Ascending aorta (tissue), 2 donors: ENCODE measurements at regions of chr20 and their contacts with region 1.

Region 1: DNA sequence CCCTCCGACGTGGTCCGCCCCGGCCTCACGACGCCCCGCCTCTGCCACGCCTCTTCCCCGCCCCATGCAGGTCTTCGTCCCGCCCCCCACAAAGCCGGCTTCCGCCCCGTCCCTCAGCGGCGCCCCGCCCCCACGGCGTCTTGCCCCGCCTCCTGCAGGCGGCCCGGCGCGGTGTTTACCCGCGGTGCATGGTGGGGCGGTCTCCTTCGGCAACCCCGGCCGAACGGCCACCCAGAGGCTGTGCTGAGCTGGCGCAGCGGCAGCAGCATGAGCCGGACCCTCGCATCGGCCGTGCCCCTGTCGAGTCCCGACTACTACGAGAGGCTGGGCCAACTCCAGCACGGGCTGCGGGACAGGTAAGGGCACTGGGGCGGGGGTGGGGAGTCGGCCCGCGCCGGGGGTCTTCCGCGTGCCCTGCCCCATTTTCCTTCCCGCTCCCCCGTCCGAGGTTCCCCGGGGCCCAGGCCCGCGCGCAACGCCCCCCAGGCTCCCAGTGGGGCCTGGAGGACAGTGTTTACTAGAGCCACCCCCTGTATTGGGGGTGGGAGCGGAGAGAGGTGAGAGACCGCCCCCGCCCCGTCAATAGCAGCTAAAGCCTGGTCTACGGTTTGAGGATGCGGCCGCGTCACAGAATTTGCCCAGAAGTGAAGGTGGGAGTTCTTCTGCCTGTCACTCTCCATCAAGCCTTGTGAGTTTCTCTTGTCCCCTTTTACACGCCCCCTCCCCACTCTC is at the start of gene KIZ:
- DNase-seq: peak; percentile 81 to 97
- H3K4me3 ChIP-seq: peak within 1 kb of the TSS; percentile 74 to 96
- H3K27ac ChIP-seq: peak within 1 kb of the TSS; percentile 72 to 83
- H3K4me1 ChIP-seq: peaks cover 2 to 4% of the 10 kb centered on the region in 2 donors
- H3K27me3 ChIP-seq: no peaks in the 10 kb centered on the region
- CTCF ChIP-seq: peak; percentile 39 to 67 (median 41)
- total RNA-seq, gene KIZ: 7.8 TPM

Region 2: DNA sequence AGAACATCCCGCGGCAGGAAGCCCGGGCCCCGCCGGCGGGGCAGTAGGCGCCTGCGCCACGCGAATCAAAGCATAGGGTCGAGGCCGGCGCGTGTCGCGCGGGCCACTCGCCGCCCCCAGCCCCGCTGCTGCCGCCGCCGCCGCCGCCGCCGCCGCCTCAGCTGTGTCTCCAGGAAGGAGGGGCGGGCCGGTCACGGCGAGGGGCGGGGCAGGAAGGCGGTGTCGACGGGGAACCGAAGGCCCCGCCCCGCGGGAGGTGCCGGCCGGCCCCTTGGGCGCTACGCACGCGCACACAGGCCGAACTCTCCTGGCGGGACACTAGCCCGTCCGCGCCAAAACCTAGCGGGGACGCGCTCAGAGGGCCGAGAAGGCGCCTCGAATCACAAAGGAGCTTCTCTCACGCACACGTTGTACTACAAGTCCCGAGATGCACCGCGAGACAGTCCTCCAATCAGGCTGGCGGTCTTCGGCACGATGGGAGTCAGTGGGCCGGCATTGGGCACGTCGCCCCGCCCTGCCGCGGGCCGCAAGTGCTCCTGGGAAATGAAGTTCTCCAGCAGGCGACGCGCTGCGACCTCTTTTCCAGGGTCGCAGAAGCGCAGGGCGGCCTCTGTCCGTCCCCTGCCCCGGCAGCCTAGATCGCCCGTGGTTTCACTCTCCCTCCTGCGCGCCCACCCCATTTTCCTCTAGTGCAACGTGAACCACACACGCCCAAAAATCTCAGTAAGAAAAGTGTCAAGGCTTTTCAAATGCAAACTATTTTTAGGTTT is 413.4 kb before region 1 on chr20 and contains the start of gene RALGAPA2:
- intact Hi-C with region 1: loop called (anchors 5 kb)
- DNase-seq: peak; percentile 92 to 99
- H3K4me3 ChIP-seq: peak within 1 kb of the TSS; percentile 93 to 96
- H3K27ac ChIP-seq: peak within 1 kb of the TSS; percentile 90 to 92
- H3K4me1 ChIP-seq: peaks cover 3 to 10% of the 10 kb centered on the region in 2 donors
- H3K27me3 ChIP-seq: no peaks in the 10 kb centered on the region
- CTCF ChIP-seq: peak in 2 of 3 experiments; percentile 13 to 21
- total RNA-seq, gene RALGAPA2: 68.9 TPM

Region 3: DNA sequence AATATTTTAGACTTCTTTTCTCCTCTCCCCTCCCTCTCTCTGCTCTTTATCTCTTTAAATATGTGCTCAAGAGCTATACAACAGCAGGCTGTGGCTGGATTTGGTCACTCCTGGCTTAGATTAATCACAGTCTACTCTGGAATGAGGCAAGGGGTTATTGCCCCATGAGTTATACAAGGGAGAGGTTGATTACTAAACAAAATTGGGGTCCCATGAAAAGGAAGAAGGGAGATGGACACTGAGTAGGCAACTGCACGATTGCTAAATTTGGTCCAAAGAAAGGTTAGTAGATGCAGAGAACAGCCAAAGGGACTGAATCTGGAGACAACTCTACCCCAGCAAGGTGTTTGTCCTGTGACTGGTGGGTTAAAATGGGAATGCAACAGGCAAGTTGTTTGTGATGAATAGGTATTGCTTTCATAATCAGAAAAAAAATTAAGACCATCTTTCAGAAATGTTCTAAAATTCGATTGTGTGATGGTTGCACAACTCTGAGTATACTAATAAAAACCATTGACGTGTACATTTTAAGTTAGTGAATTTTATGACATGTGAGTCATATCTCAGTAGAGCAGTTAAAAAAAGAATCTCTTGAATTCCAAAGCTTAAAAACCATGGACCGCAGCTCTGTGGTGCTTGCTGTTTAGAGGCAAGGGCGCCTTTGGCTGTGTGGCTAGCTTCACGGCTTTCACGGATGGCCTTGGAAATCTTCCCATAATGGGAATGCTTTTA is 57.0 kb after region 1 on chr20:
- intact Hi-C with region 1: loop called (anchors 2 kb)
- DNase-seq: peak in 1 of 2 donors; percentile 69
- H3K4me3 ChIP-seq: no peak overlapping the region
- H3K27ac ChIP-seq: peak overlapping the region; percentile 55 to 79
- H3K4me1 ChIP-seq: peaks cover 0 to 14% of the 10 kb centered on the region in 2 donors
- H3K27me3 ChIP-seq: no peaks in the 10 kb centered on the region
- CTCF ChIP-seq: no peak